Activated naive CD4-positive, alpha-beta T cell treated with anti-CD3 and anti-CD28 coated beads for 36 hours (primary cell): ENCODE measurements at regions of chr3 and their contacts with region 1.

Region 1: DNA sequence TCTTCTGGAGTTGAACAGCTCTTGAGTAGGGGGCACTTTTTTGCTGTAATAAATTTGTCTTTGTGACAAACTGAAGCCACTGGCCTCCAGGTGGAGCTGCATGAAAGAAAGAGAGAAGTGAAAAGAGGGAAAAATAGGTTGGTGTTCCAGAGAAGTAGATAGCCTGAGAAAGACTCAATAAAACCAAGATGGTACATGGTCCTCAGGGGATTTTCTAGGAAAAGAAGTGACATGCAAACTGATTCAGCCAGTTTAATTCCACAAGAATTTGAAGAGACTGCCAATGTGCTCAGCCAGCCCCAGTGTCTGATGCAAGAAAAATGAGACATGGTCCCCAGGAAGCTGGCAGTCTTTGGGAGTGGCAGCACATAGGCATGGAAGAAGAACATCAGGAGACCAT is 152.7 kb downstream of the CD47 start:
- DNase-seq: peak; percentile 21
- H3K4me3 Mint-ChIP-seq: no peak overlapping the region
- H3K27ac Mint-ChIP-seq: no peak overlapping the region
- H3K4me1 Mint-ChIP-seq: peaks cover 20% of the 10 kb centered on the region
- H3K27me3 Mint-ChIP-seq: no peaks in the 10 kb centered on the region

Region 2: DNA sequence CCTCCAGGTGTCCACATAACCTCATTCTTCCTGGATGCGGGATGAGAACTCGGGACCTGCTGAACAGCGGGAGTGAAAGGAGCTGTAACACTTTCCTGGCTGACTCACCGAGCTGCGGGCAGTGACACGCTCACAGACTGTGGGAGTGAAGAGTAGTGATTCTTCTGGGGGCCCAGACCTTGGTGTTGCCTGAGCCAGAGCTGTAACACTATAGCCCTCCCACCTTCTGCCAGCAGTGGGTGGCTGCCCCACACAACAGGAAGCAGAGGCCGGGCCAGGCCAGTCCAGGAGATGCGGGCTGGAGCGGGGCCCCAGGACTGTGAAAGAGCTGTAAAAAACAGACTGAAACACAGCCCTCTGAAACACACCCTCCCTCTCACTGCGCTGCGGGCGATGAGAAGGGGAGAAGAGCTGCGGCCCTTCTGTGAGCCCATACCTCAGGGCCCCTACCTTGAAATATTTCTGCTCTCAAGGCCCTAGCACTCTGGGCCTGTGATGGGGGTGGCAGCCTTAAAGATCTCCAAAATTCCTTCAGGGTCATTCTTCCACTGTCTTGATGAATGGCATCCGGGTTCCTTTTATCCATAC is 1024.9 kb before region 1 on chr3:
- CTCF ChIA-PET with region 1: no interaction called
- intact Hi-C with region 1: no loop called
- DNase-seq: no peak
- H3K4me3 Mint-ChIP-seq: no peak overlapping the region
- H3K27ac Mint-ChIP-seq: no peak overlapping the region
- H3K4me1 Mint-ChIP-seq: no peaks in the 10 kb centered on the region
- H3K27me3 Mint-ChIP-seq: peaks cover 6% of the 10 kb centered on the region

Region 3: GRCh38 chr3:107013641-107014040 is 924.5 kb before region 1 on chr3:
- CTCF ChIA-PET with region 1: no interaction called
- intact Hi-C with region 1: no loop called
- DNase-seq: no peak
- H3K4me3 Mint-ChIP-seq: no peak overlapping the region
- H3K27ac Mint-ChIP-seq: no peak overlapping the region
- H3K4me1 Mint-ChIP-seq: no peaks in the 10 kb centered on the region
- H3K27me3 Mint-ChIP-seq: no peaks in the 10 kb centered on the region

Region 4: DNA sequence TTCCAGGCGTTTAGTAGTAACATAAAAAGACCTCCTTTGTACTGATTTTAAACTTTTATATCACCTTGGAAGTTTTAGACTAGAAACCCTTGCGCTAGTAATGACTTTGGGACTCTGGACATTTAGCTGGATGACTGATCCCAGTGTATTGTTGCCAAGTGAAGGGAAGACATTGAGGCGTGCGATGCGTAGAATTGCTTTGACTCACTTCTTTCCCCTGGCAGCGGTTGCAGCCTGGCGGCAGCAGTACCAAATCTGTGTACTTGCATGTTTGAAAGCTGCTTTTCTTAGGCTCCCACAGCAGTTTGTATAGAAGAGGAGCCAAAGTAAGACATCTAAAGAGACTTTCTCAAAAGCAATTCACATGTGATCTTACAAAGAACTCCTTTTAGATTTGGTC is 263.8 kb before region 1 on chr3:
- CTCF ChIA-PET with region 1: no interaction called
- intact Hi-C with region 1: no loop called
- DNase-seq: no peak
- H3K4me3 Mint-ChIP-seq: no peak overlapping the region
- H3K27ac Mint-ChIP-seq: no peak overlapping the region
- H3K4me1 Mint-ChIP-seq: peaks cover 18% of the 10 kb centered on the region
- H3K27me3 Mint-ChIP-seq: no peaks in the 10 kb centered on the region

Region 5: DNA sequence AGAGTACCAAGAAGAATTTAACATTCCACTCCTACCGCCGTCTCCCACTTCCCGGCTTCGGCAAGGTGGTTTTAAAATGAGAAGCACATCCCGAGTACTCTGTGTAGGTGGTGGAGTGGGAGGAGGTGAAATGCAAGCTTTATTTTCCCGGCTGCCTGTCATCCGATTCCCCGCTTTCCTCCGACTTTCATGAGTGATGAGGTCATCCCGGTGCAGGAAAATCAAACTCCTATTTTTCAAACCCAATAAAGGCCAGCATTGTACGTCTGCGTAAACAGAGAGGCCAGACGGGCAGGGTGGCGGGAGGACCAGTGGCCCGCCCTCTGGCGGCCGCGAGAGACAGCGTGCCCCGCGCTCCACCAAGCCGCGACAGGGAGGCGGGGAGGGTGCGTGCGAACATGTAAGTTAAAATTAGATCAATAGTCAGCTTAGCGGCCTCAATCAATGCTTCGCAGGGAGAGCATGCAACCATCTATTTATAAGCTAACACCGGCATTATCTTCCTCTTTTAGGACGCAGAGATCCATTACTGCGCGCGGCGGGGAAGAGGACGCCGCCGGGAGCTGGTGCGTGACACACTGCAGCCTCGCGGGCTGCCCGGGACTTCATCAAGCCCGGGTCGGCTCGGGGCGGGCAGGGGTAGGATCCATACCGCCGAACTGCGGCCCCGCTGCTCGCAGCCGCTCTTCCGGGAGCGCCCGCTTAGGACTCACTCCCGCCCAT is 10.6 kb before region 1 on chr3:
- CTCF ChIA-PET with region 1: interaction called, 38 read pairs
- intact Hi-C with region 1: no loop called
- DNase-seq: peak; percentile 74
- H3K4me3 Mint-ChIP-seq: peak overlapping the region; percentile 70
- H3K27ac Mint-ChIP-seq: no peak overlapping the region
- H3K4me1 Mint-ChIP-seq: peaks cover 7% of the 10 kb centered on the region
- H3K27me3 Mint-ChIP-seq: peaks cover 11% of the 10 kb centered on the region

Region 6: DNA sequence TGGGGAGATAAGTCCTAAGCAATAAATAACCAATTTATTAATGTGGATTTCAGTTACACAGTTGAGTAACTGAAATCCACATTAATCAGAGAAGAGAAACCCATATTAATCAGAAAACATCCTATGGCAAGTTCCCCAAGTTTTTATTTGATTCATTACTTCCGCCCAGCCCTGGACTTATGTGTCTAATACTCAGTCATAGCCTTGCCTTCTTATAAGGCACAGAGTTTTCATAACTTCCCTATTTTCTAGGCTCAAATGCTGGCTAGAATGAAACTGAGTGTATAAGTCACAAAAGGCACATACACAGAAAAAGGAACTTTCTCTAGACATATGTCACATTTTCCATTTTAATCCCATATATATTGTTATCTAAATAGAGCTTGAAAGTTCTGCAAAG is 123.9 kb after region 1 on chr3:
- CTCF ChIA-PET with region 1: no interaction called
- intact Hi-C with region 1: loop called (anchors 5 kb)
- DNase-seq: no peak
- H3K4me3 Mint-ChIP-seq: no peak overlapping the region
- H3K27ac Mint-ChIP-seq: no peak overlapping the region
- H3K4me1 Mint-ChIP-seq: peaks cover 59% of the 10 kb centered on the region
- H3K27me3 Mint-ChIP-seq: no peaks in the 10 kb centered on the region

Region 7: GRCh38 chr3:108322352-108322751 is 384.2 kb after region 1 on chr3:
- CTCF ChIA-PET with region 1: no interaction called
- intact Hi-C with region 1: loop called (anchors 1 kb)
- DNase-seq: peak; percentile 55
- H3K4me3 Mint-ChIP-seq: no peak overlapping the region
- H3K27ac Mint-ChIP-seq: no peak overlapping the region
- H3K4me1 Mint-ChIP-seq: peaks cover 9% of the 10 kb centered on the region
- H3K27me3 Mint-ChIP-seq: no peaks in the 10 kb centered on the region

Region 8: DNA sequence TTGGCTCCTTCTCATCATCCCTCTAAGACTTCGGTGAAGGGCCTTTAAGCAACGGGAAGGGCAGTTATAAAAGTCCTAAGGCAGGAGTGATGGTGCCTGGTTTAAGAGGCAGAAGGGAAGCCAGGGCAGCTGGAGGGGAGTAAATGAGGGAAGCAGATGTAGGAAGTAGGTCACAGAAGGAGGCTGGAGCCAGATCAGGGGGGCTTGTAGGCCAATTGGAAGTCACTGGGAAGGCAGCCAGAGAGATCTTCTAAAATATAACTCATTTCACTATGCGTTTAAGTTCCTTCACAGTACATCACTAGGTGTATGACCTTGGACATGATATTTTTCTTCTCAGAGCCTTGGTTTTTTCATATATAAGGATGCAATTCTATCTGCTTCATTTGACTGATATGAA is 477.5 kb after region 1 on chr3:
- CTCF ChIA-PET with region 1: no interaction called
- intact Hi-C with region 1: loop called (anchors 1 kb)
- DNase-seq: no peak
- H3K4me3 Mint-ChIP-seq: no peak overlapping the region
- H3K27ac Mint-ChIP-seq: no peak overlapping the region
- H3K4me1 Mint-ChIP-seq: peaks cover 18% of the 10 kb centered on the region
- H3K27me3 Mint-ChIP-seq: peaks cover 12% of the 10 kb centered on the region